Activated naive CD4-positive, alpha-beta T cell treated with anti-CD3 and anti-CD28 coated beads, Interleukin-2, amount 10 ng/mL, durations not matched to agents 7 days and 5 days (primary cell): ENCODE measurements at regions of chr14 and their contacts with region 1.

Region 1: DNA sequence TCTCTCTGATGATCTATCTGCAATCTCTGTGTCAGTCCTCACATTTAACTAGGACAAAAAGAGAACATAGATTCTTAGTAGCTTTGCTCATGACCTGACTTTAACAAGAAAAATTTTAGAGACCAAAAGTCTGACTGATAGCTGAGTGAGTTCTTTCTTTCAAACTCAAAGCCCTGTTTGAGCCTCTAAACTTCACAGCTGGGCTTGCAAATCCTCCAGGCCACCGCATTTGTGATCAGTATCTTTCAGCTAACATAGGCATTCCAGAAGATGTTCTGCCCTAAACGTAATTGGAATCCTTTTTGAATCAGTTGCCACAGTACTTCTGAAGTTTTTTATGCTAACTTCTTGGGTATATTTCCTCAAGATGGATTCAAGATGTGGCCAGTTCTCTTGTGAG is 459.0 kb downstream of the DPF3 start:
- DNase-seq: no peak
- H3K4me3 Mint-ChIP-seq: no peak overlapping the region
- H3K27ac Mint-ChIP-seq: no peak overlapping the region
- H3K4me1 Mint-ChIP-seq: peaks cover 60% of the 10 kb centered on the region
- H3K27me3 Mint-ChIP-seq: peaks cover 20% of the 10 kb centered on the region

Region 2: GRCh38 chr14:72451054-72451972 is 16.5 kb after region 1 on chr14:
- CTCF ChIA-PET with region 1: interaction called, 10 read pairs
- DNase-seq: peak; percentile 66
- H3K4me3 Mint-ChIP-seq: peak overlapping the region; percentile 14
- H3K27ac Mint-ChIP-seq: peak overlapping the region; percentile 85
- H3K4me1 Mint-ChIP-seq: peaks cover 63% of the 10 kb centered on the region
- H3K27me3 Mint-ChIP-seq: peaks cover 6% of the 10 kb centered on the region

Region 3: GRCh38 chr14:72594099-72594901 is 159.4 kb after region 1 on chr14:
- CTCF ChIA-PET with region 1: no interaction called
- DNase-seq: peak; percentile 70
- H3K4me3 Mint-ChIP-seq: peak overlapping the region; percentile 64
- H3K27ac Mint-ChIP-seq: peak overlapping the region; percentile 92
- H3K4me1 Mint-ChIP-seq: peaks cover 74% of the 10 kb centered on the region
- H3K27me3 Mint-ChIP-seq: peaks cover 54% of the 10 kb centered on the region

Region 4: GRCh38 chr14:72822946-72823611 is 388.2 kb after region 1 on chr14:
- CTCF ChIA-PET with region 1: no interaction called
- DNase-seq: no peak
- H3K4me3 Mint-ChIP-seq: no peak overlapping the region
- H3K27ac Mint-ChIP-seq: no peak overlapping the region
- H3K4me1 Mint-ChIP-seq: no peaks in the 10 kb centered on the region
- H3K27me3 Mint-ChIP-seq: peaks cover 40% of the 10 kb centered on the region